GM10248 (cell line): ENCODE measurements at regions of chr19 and their contacts with region 1.

Region 1: GRCh38 chr19:42028304-42029216 is 34.5 kb upstream of the ATP1A3 start:
- DNase-seq: no peak
- CTCF ChIP-seq: peak; percentile 61

Region 2: GRCh38 chr19:42038666-42039065 is 10.1 kb after region 1 on chr19:
- CTCF ChIA-PET with region 1: interaction called, 13 read pairs
- POLR2A ChIA-PET with region 1: no interaction called
- DNase-seq: no peak
- CTCF ChIP-seq: no peak

Region 3: GRCh38 chr19:42048992-42049391 is 20.4 kb after region 1 on chr19:
- CTCF ChIA-PET with region 1: interaction called, 19 read pairs
- POLR2A ChIA-PET with region 1: no interaction called
- DNase-seq: no peak
- CTCF ChIP-seq: no peak